WTC11 (cell line): ENCODE measurements at regions of chr1 and their contacts with region 1.

Region 1: GRCh38 chr1:156136970-156137483 is 16.4 kb upstream of the SEMA4A start:
- DNase-seq: peak; percentile 55
- ATAC-seq: peak; percentile 24; the same call in 1 of the 2 replicates
- H3K4me3 Mint-ChIP-seq: no peak overlapping the region
- H3K27ac Mint-ChIP-seq: no peak overlapping the region
- H3K4me1 Mint-ChIP-seq: peaks cover 9% of the 10 kb centered on the region
- H3K27me3 Mint-ChIP-seq: no peaks in the 10 kb centered on the region
- CTCF ChIP-seq: no peak

Region 2: DNA sequence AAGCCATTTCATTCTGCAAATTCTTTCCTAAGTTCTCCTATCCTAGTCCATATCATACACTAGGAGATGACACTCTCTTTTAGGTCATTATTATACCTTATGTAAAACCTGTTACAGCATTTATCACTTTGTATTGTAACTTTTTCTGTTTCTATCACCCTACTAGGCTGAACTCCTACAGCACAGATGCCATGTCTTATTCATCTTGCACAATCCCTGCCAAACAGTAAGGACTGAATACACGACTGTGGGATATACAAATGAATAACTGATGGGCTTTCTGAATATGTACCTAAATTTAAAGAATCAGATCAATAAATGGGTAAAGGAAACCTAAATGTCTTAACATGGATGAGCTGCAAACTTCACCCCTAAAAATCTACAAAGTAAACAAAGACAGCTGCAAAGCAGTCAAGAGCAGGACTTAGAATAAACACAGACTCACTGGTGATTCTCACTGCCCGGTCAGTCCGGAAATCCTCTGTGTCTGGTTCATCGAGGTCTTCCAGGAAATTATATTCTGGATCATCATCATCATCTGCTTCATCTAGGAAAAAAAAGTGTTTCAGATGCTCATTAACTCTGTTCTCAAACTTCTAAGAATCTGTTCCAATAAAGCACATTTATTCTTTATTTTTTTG is 342.3 kb before region 1 on chr1:
- CTCF ChIA-PET with region 1: no interaction called
- POLR2A ChIA-PET with region 1: no interaction called
- DNase-seq: no peak
- ATAC-seq: no peak
- H3K4me3 Mint-ChIP-seq: no peak overlapping the region
- H3K27ac Mint-ChIP-seq: no peak overlapping the region
- H3K4me1 Mint-ChIP-seq: no peaks in the 10 kb centered on the region
- H3K27me3 Mint-ChIP-seq: no peaks in the 10 kb centered on the region
- CTCF ChIP-seq: no peak

Region 3: DNA sequence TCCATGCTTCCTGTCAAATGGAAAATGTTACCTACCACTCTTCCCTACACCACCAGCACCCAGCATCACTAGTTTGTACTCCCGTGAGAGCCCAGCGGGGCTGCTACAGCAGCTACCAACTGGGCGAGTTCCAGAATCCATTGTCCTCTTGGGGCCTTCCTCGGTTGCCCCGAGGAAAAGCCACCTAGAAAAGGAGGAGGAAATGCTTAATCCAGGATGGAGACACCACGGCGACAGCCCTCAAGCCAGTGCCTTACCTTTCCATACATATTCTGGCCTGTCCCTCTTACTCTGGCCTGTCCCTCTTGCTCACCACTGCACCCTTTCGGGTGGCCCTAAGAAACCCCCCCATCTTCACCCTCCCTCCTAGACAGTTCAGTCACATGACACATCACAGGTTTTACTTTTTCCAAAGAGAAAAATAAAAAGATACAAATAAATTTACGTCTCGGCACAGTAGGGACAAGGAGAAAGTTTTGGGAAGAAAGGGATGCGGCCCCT is 226.4 kb before region 1 on chr1:
- CTCF ChIA-PET with region 1: no interaction called
- POLR2A ChIA-PET with region 1: no interaction called
- DNase-seq: peak; percentile 15
- ATAC-seq: peak; percentile 52
- H3K4me3 Mint-ChIP-seq: peak overlapping the region; percentile 95
- H3K27ac Mint-ChIP-seq: peak overlapping the region; percentile 69
- H3K4me1 Mint-ChIP-seq: peaks cover 13% of the 10 kb centered on the region
- H3K27me3 Mint-ChIP-seq: no peaks in the 10 kb centered on the region
- CTCF ChIP-seq: no peak

Region 4: GRCh38 chr1:156123356-156124196 is 13.5 kb before region 1 on chr1:
- CTCF ChIA-PET with region 1: interaction called, 28 read pairs
- POLR2A ChIA-PET with region 1: interaction called, 3 read pairs
- DNase-seq: peak; percentile 68
- ATAC-seq: peak; percentile 56
- H3K4me3 Mint-ChIP-seq: peak overlapping the region; percentile 42
- H3K27ac Mint-ChIP-seq: peak overlapping the region; percentile 73
- H3K4me1 Mint-ChIP-seq: peaks cover 57% of the 10 kb centered on the region
- H3K27me3 Mint-ChIP-seq: no peaks in the 10 kb centered on the region
- CTCF ChIP-seq: peak; percentile 16; the same call in 1 of the 2 replicates

Region 5: GRCh38 chr1:156172696-156173470 is 35.9 kb after region 1 on chr1:
- CTCF ChIA-PET with region 1: interaction called, 16 read pairs
- POLR2A ChIA-PET with region 1: no interaction called
- DNase-seq: peak; percentile 64
- ATAC-seq: peak; percentile 89
- H3K4me3 Mint-ChIP-seq: no peak overlapping the region
- H3K27ac Mint-ChIP-seq: no peak overlapping the region; the same call in 1 of the 2 replicates
- H3K4me1 Mint-ChIP-seq: peaks cover 31% of the 10 kb centered on the region
- H3K27me3 Mint-ChIP-seq: no peaks in the 10 kb centered on the region
- CTCF ChIP-seq: no peak

Region 6: GRCh38 chr1:156212833-156213643 is 76.0 kb after region 1 on chr1 and contains the start of gene PMF1:
- CTCF ChIA-PET with region 1: interaction called, 57 read pairs
- POLR2A ChIA-PET with region 1: interaction called, 9 read pairs
- DNase-seq: peak; percentile 97
- ATAC-seq: peak; percentile 95
- H3K4me3 Mint-ChIP-seq: peak within 1 kb of the TSS; percentile 94
- H3K27ac Mint-ChIP-seq: peak within 1 kb of the TSS; percentile 99
- H3K4me1 Mint-ChIP-seq: peaks cover 27% of the 10 kb centered on the region
- H3K27me3 Mint-ChIP-seq: no peaks in the 10 kb centered on the region
- CTCF ChIP-seq: no peak
- total RNA-seq, gene PMF1: 112 to 129 TPM (median 115 TPM) in 3 replicates

Region 7: GRCh38 chr1:156245451-156246232 is 108.6 kb after region 1 on chr1:
- CTCF ChIA-PET with region 1: interaction called, 84 read pairs
- POLR2A ChIA-PET with region 1: interaction called, 5 read pairs
- DNase-seq: peak; percentile 63
- ATAC-seq: peak; percentile 23
- H3K4me3 Mint-ChIP-seq: peak overlapping the region; percentile 74
- H3K27ac Mint-ChIP-seq: no peak overlapping the region
- H3K4me1 Mint-ChIP-seq: peaks cover 22% of the 10 kb centered on the region
- H3K27me3 Mint-ChIP-seq: peaks cover 4% of the 10 kb centered on the region
- CTCF ChIP-seq: no peak